ENCODE measurements at regions of chr12 and their contacts with region 1.

Region 1: DNA sequence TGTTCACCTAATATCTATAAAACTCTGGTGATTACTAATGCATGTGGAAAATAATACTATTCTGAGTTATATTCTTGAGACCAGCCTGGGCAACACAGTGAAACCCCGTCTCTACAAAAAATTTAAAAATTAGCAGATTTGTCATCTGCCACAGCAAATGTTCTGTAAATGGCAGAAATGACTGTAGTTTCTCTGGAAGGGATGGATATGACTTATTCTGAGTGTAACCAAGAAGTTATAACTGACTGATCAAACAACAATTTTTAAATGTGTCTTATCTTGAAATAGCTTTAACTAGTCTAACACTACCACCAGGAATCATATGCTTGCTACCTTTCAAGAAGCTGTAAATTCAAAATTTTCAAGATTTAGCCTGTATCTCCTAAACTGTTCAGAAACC is 88.7 kb downstream of the PLBD1 start:
- DNase-seq: no peak
- ATAC-seq: no peak
- H3K4me3 ChIP-seq: no peak overlapping the region
- H3K4me3 Mint-ChIP-seq: no peak overlapping the region
- H3K27ac ChIP-seq: no peak overlapping the region
- H3K27ac Mint-ChIP-seq: no peak overlapping the region
- H3K4me1 ChIP-seq: no peaks in the 10 kb centered on the region
- H3K4me1 Mint-ChIP-seq: no peaks in the 10 kb centered on the region
- H3K27me3 ChIP-seq: no peaks in the 10 kb centered on the region
- H3K27me3 Mint-ChIP-seq: no peaks in the 10 kb centered on the region
- CTCF ChIP-seq: no peak

Region 2: GRCh38 chr12:14435627-14436026 is 43.4 kb before region 1 on chr12:
- CTCF ChIA-PET with region 1: no interaction called
- POLR2A ChIA-PET with region 1: no interaction called
- intact Hi-C with region 1: loop called in 1 of 2 experiments (anchors 2 kb)
- DNase-seq: no peak
- ATAC-seq: no peak
- H3K4me3 ChIP-seq: no peak overlapping the region
- H3K4me3 Mint-ChIP-seq: no peak overlapping the region
- H3K27ac ChIP-seq: no peak overlapping the region
- H3K27ac Mint-ChIP-seq: no peak overlapping the region
- H3K4me1 ChIP-seq: peaks cover 4% of the 10 kb centered on the region
- H3K4me1 Mint-ChIP-seq: peaks cover 35% of the 10 kb centered on the region
- H3K27me3 ChIP-seq: no peaks in the 10 kb centered on the region
- H3K27me3 Mint-ChIP-seq: no peaks in the 10 kb centered on the region
- CTCF ChIP-seq: no peak

Measured in CD4-positive, alpha-beta T cell (primary cell).